PC-9 (cell line): ENCODE measurements at regions of chr21 and their contacts with region 1.

Region 1: GRCh38 chr21:34881894-34882371 is 167.2 kb downstream of the RUNX1 start:
- DNase-seq: peak in 1 of 2 experiments; percentile 87
- H3K4me3 ChIP-seq: peak overlapping the region; percentile 97
- H3K27ac ChIP-seq: peak overlapping the region; percentile 99
- H3K4me1 ChIP-seq: peaks cover 69% of the 10 kb centered on the region
- H3K27me3 ChIP-seq: no peaks in the 10 kb centered on the region
- CTCF ChIP-seq: no peak

Region 2: DNA sequence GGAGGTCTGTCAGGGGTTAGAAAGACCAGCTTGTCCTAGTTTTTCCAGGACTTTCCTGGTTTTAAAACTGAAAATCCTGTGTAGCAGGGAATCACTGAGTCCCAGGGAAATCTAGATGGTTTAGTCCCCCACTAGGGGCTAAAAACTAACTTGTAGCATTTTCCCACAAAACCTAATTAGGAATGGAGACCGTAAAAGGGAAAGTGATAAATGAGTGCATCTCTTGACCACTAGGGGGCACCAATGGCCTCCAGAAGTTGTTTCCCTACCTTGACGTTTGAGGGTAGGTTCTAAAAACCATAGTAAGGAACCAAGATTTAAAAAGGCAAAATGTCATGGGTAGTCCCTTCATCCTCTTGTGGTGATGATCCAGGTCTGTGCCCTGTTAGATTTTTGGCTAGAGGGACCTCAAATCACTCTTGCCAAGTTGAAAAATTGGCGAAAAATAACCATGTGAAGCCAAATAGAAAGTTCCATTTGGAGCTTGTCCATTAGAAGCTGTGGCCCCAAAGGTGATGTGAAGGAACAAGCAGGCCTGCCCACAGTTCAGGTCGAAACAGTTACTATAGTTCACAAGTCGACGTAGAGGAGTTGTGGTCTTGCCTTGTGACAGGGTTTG is 188.6 kb before region 1 on chr21:
- CTCF ChIA-PET with region 1: no interaction called
- POLR2A ChIA-PET with region 1: interaction called, 10 read pairs
- intact Hi-C with region 1: no loop called
- DNase-seq: peak; percentile 39
- H3K4me3 ChIP-seq: no peak overlapping the region
- H3K27ac ChIP-seq: 0 out of 2 replicates have a peak overlapping the region, but pooled peaks have one; percentile 89
- H3K4me1 ChIP-seq: peaks cover 38% of the 10 kb centered on the region
- H3K27me3 ChIP-seq: no peaks in the 10 kb centered on the region
- CTCF ChIP-seq: peak; percentile 86

Region 3: DNA sequence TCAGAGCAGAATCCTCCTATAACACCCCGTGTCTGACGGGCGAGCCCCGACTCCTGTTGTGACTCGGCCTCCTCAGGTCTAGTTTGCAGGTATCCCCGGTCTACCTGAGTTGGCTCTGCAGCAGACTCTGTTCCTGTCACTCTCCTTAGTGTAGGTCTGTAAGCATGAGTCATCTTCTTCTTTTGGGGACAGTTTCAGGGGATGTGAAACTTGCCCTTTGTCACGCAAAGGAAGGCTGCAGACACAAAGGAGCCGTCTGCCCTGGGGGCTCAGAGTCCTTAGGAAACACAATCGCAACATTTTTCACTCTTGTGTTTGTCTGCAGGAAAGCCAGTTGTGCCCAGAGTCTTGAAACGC is 16.0 kb before region 1 on chr21:
- CTCF ChIA-PET with region 1: no interaction called
- POLR2A ChIA-PET with region 1: interaction called, 6 read pairs
- intact Hi-C with region 1: loop called (anchors 1 kb)
- DNase-seq: peak; percentile 69 to 89
- H3K4me3 ChIP-seq: 0 out of 2 replicates have a peak overlapping the region, but pooled peaks have one; percentile 11
- H3K27ac ChIP-seq: peak overlapping the region; percentile 88
- H3K4me1 ChIP-seq: peaks cover 69% of the 10 kb centered on the region
- H3K27me3 ChIP-seq: no peaks in the 10 kb centered on the region
- CTCF ChIP-seq: no peak

Region 4: GRCh38 chr21:34967509-34968289 is 85.8 kb after region 1 on chr21:
- CTCF ChIA-PET with region 1: no interaction called
- POLR2A ChIA-PET with region 1: no interaction called
- intact Hi-C with region 1: no loop called
- DNase-seq: peak; percentile 60 to 87
- H3K4me3 ChIP-seq: no peak overlapping the region
- H3K27ac ChIP-seq: peak overlapping the region; percentile 92
- H3K4me1 ChIP-seq: peaks cover 54% of the 10 kb centered on the region
- H3K27me3 ChIP-seq: no peaks in the 10 kb centered on the region
- CTCF ChIP-seq: no peak